Gastrocnemius medialis (tissue), 4 donors: ENCODE measurements at regions of chr1 and their contacts with region 1.

Region 1: GRCh38 chr1:16351994-16352841 is at the start of gene FBXO42:
- DNase-seq: peak; percentile 76 to 88
- ATAC-seq: peak; percentile 91 to 93
- H3K4me3 ChIP-seq: peak within 1 kb of the TSS; percentile 83 to 100 (median 96)
- H3K27ac ChIP-seq: peak within 1 kb of the TSS; percentile 95 to 99 (median 97)
- H3K4me1 ChIP-seq: peaks cover 34 to 36% of the 10 kb centered on the region in 2 donors
- H3K27me3 ChIP-seq: no peaks in the 10 kb centered on the region
- CTCF ChIP-seq: peak; percentile 26 to 67 (median 43)
- POLR2A ChIP-seq: peak; percentile 89 to 96
- total RNA-seq, gene FBXO42: 23.1 to 32.4 (median 27.2) TPM

Region 2: GRCh38 chr1:16078925-16079656 is 273.1 kb before region 1 on chr1:
- in situ Hi-C with region 1: loop called in 3 of 4 experiments (anchors 25 kb)
- intact Hi-C with region 1: no loop called
- DNase-seq: peak; percentile 39 to 59
- ATAC-seq: peak; percentile 60 to 62
- H3K4me3 ChIP-seq: peak overlapping the region in 1 of 4 donors; percentile 47
- H3K27ac ChIP-seq: no peak overlapping the region
- H3K4me1 ChIP-seq: peaks cover 3 to 12% of the 10 kb centered on the region in 2 donors
- H3K27me3 ChIP-seq: no peaks in the 10 kb centered on the region
- CTCF ChIP-seq: peak; percentile 79 to 89 (median 86)
- POLR2A ChIP-seq: no peak

Region 3: GRCh38 chr1:16122916-16123315 is 229.3 kb before region 1 on chr1:
- in situ Hi-C with region 1: no loop called
- intact Hi-C with region 1: no loop called
- DNase-seq: no peak
- ATAC-seq: no peak
- H3K4me3 ChIP-seq: no peak overlapping the region
- H3K27ac ChIP-seq: no peak overlapping the region
- H3K4me1 ChIP-seq: no peaks in the 10 kb centered on the region
- H3K27me3 ChIP-seq: no peaks in the 10 kb centered on the region
- CTCF ChIP-seq: no peak
- POLR2A ChIP-seq: no peak

Region 4: DNA sequence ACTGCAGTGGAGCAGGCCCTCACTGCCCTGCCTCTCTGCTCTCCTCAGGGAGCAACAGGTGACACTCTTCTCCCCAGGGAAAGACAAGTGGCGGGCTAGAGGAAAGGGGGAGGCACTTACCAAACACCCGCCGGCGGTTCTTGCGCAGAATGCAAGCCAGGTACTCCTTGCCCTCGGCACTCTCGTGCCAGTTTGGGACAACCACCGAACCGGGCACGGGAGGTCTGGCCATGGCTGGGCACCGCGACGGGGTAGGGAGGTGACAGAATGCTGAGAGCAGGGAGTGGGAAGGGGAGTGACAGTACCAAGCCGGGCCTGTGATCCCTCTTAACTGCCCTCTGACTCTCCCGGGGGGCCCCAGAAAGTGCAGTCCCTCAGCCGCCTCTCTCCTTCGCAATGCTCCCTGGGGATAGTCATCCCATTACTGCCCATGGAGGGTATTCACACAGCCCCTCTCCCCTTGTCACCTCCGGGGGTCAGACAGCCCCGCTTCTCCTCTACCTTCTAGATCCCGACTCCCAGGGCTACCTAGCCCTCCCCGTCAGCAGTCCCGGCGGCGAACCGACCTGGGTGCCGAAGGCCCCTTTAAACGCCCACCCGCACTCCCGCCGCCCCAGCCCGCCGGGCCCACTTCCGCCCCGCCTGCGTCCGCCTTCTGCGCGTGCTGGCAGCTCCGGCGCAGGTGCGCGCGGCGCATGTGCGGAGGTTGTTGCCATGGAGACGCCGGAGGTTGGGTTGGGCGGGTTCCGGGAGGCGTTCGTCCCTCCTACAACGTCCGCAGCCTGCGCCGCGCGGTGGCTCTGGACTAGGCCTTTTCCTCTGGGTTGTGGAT is 115.5 kb before region 1 on chr1 and contains the start of gene CPLANE2:
- in situ Hi-C with region 1: loop called in 2 of 4 experiments (anchors 10 to 25 kb)
- intact Hi-C with region 1: loop called (anchors 5 kb)
- DNase-seq: peak; percentile 86 to 90
- ATAC-seq: peak; percentile 77 to 86
- H3K4me3 ChIP-seq: peak within 1 kb of the TSS; percentile 69 to 78 (median 74)
- H3K27ac ChIP-seq: peak within 1 kb of the TSS; percentile 76 to 90 (median 80)
- H3K4me1 ChIP-seq: peaks cover 11 to 12% of the 10 kb centered on the region in 2 donors
- H3K27me3 ChIP-seq: no peaks in the 10 kb centered on the region
- CTCF ChIP-seq: no peak
- POLR2A ChIP-seq: peak; percentile 76 to 77
- total RNA-seq, gene CPLANE2: 0.46 to 6.3 (median 3.1) TPM

Region 5: GRCh38 chr1:16293538-16293937 is 58.7 kb before region 1 on chr1:
- in situ Hi-C with region 1: loop called in 1 of 4 experiments (anchors 10 kb)
- intact Hi-C with region 1: loop called (anchors 5 kb)
- DNase-seq: no peak
- ATAC-seq: no peak
- H3K4me3 ChIP-seq: no peak overlapping the region
- H3K27ac ChIP-seq: peak overlapping the region; percentile 50 to 62 (median 58)
- H3K4me1 ChIP-seq: peaks cover 17 to 25% of the 10 kb centered on the region in 2 donors
- H3K27me3 ChIP-seq: no peaks in the 10 kb centered on the region
- CTCF ChIP-seq: no peak
- POLR2A ChIP-seq: no peak